IMR-90 (cell line): ENCODE measurements at regions of chr4 and their contacts with region 1.

Region 1: DNA sequence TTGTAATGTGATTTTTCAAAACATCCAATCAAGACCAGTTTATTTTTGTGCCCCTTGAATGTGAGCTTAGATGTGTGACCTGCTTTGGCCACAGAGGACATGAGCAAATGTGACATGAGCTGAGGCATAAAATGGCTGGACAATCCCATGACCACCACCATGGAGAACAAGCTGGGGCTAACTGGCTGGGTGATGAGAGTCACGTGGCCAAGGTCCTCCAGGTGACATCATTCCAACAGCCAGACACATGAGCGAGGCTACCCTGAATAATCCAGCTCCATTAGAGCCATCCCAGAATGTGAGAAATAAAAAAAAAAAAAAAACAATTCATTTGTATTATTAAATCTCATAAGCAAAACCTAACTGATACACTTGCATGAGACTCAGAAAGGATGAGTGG is 90.4 kb upstream of the LDB2 start:
- DNase-seq: no peak
- ATAC-seq: no peak
- H3K4me3 ChIP-seq: no peak overlapping the region
- H3K27ac ChIP-seq: no peak overlapping the region
- H3K4me1 ChIP-seq: no peaks in the 10 kb centered on the region
- H3K27me3 ChIP-seq: no peaks in the 10 kb centered on the region
- CTCF ChIP-seq: no peak
- POLR2A ChIP-seq: no peak
- RAD21 ChIP-seq: no peak

Region 2: DNA sequence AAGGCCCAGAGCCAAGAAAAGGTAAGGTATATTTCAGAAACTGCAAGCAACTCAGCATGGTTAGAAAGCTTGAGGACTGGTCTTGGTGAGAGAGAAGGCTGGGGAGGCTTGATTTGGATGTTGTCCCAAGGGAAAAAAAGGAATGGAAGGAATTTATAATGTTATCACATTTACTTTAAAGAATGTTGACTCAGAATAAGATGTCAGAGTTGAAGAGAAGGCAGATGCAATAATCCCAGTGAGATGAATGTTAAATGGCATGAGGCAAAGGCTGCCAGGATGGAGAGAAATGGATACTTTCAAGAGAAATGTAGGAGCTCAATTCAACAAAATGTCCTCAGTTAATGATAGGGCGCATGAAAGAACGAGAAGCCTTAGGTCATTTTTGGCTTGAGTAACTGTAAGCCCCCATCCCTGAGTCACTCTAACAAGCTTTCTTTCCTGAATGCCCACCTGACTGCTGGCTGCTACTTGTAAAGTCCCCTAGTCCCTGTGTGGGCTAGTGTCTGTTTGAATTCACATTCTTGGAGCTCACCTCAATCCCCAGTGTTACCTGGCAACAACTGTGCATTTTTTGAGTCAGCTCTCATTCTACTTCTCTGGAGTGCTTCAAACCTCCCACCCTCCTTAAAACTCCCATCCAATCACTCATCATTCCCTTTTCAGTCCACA is 659.6 kb before region 1 on chr4:
- CTCF ChIA-PET with region 1: no interaction called
- POLR2A ChIA-PET with region 1: no interaction called
- dilution Hi-C with region 1: no loop called
- in situ Hi-C with region 1: no loop called
- intact Hi-C with region 1: no loop called
- DNase-seq: peak; percentile 2
- ATAC-seq: no peak
- H3K4me3 ChIP-seq: no peak overlapping the region
- H3K27ac ChIP-seq: no peak overlapping the region
- H3K4me1 ChIP-seq: no peaks in the 10 kb centered on the region
- H3K27me3 ChIP-seq: peaks cover 4% of the 10 kb centered on the region
- CTCF ChIP-seq: no peak
- POLR2A ChIP-seq: no peak
- RAD21 ChIP-seq: no peak

Region 3: DNA sequence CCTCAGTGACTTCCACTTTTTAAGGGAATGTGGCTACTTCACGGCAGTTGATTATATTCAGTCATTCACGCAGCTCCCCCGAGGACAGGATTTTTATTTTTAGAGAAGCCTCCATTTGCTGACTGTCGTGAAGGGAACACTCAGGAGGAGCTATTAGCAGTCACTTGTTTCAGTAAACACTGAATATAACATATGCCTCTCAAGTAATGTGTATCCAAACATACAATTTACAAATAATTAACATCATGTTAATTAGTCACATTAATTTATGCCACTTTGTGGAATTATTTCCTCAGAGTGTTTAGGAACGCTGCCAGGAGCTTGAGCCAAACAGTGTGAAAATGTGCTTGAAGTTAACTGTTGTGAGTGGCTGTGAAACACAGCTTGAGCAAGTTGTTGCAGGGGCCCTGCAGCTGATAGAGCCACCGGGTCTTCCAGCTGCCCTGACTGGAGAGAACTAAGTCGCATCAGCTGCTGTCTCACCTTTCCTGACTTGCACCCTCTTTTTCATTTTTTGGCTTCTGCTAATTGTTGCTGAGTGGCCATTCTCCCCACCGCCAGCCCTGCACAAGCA is 336.0 kb before region 1 on chr4:
- CTCF ChIA-PET with region 1: no interaction called
- POLR2A ChIA-PET with region 1: no interaction called
- dilution Hi-C with region 1: no loop called
- in situ Hi-C with region 1: no loop called
- intact Hi-C with region 1: no loop called
- DNase-seq: no peak
- ATAC-seq: no peak
- H3K4me3 ChIP-seq: no peak overlapping the region
- H3K27ac ChIP-seq: no peak overlapping the region
- H3K4me1 ChIP-seq: no peaks in the 10 kb centered on the region
- H3K27me3 ChIP-seq: no peaks in the 10 kb centered on the region
- CTCF ChIP-seq: no peak
- POLR2A ChIP-seq: no peak
- RAD21 ChIP-seq: no peak

Region 4: DNA sequence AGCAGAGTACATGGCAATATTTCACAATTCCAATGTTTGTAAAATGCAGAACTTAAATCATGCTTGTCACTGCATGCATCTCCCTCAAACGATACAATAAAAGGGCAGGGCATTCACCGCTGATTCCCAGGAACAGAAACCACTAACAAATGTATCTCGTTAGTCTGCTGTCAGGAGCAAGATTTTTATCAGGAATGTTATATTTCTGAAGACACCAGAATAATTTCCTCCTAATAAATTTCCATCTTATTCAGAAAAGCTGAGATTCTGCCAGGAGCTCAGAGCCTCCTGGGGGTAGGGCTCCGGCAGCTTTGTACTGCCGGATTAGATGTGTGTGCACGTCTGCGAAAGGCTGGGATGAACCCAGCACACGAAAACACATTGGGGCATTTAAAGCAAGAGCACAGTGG is 36.3 kb before region 1 on chr4:
- CTCF ChIA-PET with region 1: interaction called, 3 read pairs
- POLR2A ChIA-PET with region 1: interaction called, 25 read pairs
- dilution Hi-C with region 1: no loop called
- in situ Hi-C with region 1: no loop called
- intact Hi-C with region 1: no loop called
- DNase-seq: no peak
- ATAC-seq: peak; percentile 67
- H3K4me3 ChIP-seq: no peak overlapping the region
- H3K27ac ChIP-seq: peak overlapping the region; percentile 12; the same call in 1 of the 2 replicates
- H3K4me1 ChIP-seq: peaks cover 2% of the 10 kb centered on the region; the same call in 1 of the 2 replicates
- H3K27me3 ChIP-seq: no peaks in the 10 kb centered on the region
- CTCF ChIP-seq: no peak
- POLR2A ChIP-seq: no peak
- RAD21 ChIP-seq: no peak

Region 5: DNA sequence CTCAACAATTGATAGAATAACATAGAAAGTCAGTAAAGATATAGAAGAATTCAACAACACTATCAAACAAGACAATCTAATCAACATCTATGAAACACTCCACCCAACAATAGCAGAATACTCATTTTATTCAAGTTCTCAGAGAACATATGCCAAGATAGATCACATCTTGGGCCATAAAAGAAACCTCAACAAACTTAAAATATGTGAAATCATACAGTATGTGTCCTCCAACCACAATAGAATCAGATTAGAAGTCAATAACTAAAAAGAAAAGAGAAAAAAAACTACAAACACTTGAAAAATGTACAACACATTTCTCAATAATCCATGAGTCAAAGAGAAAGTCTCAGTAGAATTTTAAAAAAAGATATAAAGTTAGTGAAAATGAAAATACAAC is 11.7 kb before region 1 on chr4:
- CTCF ChIA-PET with region 1: no interaction called
- POLR2A ChIA-PET with region 1: no interaction called
- dilution Hi-C with region 1: no loop called
- in situ Hi-C with region 1: no loop called
- intact Hi-C with region 1: no loop called
- DNase-seq: no peak
- ATAC-seq: no peak
- H3K4me3 ChIP-seq: no peak overlapping the region
- H3K27ac ChIP-seq: no peak overlapping the region
- H3K4me1 ChIP-seq: no peaks in the 10 kb centered on the region
- H3K27me3 ChIP-seq: no peaks in the 10 kb centered on the region
- CTCF ChIP-seq: no peak
- POLR2A ChIP-seq: no peak
- RAD21 ChIP-seq: no peak

Region 6: DNA sequence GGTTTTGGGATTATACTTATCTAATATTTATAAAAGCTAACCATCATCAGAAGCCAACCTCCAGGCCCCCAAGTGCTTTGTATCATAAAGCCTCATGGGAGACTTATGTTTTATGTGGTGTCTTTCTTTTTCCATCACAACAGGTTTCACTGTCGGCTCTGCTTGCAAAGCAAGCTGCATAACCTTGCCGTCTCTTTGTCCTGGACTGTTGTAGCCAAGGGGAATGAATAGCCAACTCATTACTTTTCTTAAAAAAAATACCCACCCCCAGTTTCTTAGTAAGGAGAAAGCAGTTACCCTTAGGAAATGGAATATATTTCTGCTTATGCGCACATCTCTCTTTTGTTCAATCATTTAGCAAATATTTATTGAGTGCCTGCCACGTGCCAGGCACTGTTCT is 751.9 kb after region 1 on chr4:
- CTCF ChIA-PET with region 1: no interaction called
- POLR2A ChIA-PET with region 1: no interaction called
- dilution Hi-C with region 1: no loop called
- in situ Hi-C with region 1: no loop called
- intact Hi-C with region 1: no loop called
- DNase-seq: no peak
- ATAC-seq: no peak
- H3K4me3 ChIP-seq: no peak overlapping the region
- H3K27ac ChIP-seq: no peak overlapping the region
- H3K4me1 ChIP-seq: no peaks in the 10 kb centered on the region
- H3K27me3 ChIP-seq: no peaks in the 10 kb centered on the region
- CTCF ChIP-seq: no peak
- POLR2A ChIP-seq: no peak
- RAD21 ChIP-seq: no peak